Colonic mucosa (tissue), 4 donors: ENCODE measurements at regions of chr2 and their contacts with region 1.

Region 1: DNA sequence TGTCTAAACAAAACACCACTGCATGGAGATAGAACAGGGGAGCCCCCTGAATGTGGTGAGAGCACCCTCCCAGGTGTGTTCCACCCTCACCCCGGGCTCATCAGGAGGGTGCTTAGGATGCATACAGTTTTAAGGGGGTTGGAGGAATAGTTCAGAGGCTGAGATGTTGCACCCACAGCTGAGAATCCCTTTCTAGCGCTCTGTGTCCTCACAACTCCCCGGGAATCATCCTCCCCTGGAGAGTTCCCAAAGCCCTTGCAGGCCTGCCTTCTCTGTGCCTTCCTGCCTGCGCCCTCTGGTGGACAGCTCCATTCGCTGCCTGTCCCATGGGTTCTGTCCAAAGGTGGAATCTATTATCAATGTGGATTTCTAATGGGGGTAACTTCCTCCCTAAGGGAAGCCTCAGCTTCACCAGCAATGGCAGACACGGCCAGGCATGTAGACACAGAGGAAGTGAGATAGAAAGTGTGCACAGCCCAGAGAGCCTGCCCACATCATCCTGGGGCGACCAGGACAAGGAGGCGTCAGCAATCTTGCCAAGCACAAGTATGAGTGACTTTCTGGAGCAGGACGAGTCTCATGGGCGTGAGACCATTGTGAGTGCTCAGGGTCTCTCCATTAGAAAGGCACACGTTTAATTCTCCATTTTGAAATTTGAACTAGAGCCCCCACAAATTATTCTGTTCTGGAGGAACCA is 1.2 kb upstream of the UGT1A5 start:
- DNase-seq: peak; percentile 88
- H3K4me3 ChIP-seq: no peak overlapping the region
- H3K27ac ChIP-seq: no peak overlapping the region
- H3K4me1 ChIP-seq: no peaks in the 10 kb centered on the region
- H3K27me3 ChIP-seq: no peaks in the 10 kb centered on the region
- CTCF ChIP-seq: peak; percentile 78

Region 2: GRCh38 chr2:233288719-233289118 is 422.7 kb before region 1 on chr2:
- intact Hi-C with region 1: loop called (anchors 10 kb)
- DNase-seq: no peak
- H3K4me3 ChIP-seq: no peak overlapping the region
- H3K27ac ChIP-seq: no peak overlapping the region
- H3K4me1 ChIP-seq: no peaks in the 10 kb centered on the region
- H3K27me3 ChIP-seq: no peaks in the 10 kb centered on the region
- CTCF ChIP-seq: no peak

Region 3: DNA sequence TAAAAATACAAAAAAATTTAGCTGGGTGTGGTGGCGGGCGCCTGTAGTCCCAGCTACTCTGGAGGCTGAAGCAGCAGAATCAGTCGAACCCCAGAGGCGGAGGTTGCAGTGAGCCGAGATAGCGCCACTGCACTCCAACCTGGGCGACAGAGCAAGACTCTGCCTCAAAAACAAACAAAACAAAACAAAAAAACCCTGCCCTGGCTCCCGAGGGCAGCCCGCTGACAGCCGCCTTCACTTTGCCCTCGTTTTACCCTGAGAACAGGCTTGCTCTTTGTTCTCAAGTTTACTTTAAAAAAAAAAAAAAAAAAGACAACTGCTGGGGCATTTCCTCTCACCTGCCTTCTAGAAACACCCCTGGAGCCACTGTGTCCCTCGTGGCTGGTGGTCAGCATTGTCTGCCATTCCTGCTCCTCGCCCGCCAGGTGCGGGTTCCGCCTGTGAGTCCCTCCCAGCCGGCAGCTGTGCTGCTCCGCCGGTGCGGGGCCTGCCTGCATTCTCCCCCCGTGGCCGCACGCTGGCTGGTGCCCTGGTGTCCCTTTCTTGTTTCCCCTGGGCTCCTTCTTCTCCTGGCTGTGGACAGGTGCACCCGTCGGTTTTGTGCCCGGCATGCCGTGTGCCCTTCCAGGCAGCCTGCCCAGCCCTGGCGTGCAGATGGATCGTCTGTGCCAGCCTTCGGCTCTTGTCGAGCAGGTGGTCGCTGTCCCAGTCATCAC is 250.6 kb before region 1 on chr2:
- intact Hi-C with region 1: loop called (anchors 10 kb)
- DNase-seq: peak; percentile 52
- H3K4me3 ChIP-seq: no peak overlapping the region
- H3K27ac ChIP-seq: no peak overlapping the region
- H3K4me1 ChIP-seq: peaks cover 4% of the 10 kb centered on the region
- H3K27me3 ChIP-seq: no peaks in the 10 kb centered on the region
- CTCF ChIP-seq: no peak